IMR-90 (cell line): ENCODE measurements at regions of chr9 and their contacts with region 1.

Region 1: DNA sequence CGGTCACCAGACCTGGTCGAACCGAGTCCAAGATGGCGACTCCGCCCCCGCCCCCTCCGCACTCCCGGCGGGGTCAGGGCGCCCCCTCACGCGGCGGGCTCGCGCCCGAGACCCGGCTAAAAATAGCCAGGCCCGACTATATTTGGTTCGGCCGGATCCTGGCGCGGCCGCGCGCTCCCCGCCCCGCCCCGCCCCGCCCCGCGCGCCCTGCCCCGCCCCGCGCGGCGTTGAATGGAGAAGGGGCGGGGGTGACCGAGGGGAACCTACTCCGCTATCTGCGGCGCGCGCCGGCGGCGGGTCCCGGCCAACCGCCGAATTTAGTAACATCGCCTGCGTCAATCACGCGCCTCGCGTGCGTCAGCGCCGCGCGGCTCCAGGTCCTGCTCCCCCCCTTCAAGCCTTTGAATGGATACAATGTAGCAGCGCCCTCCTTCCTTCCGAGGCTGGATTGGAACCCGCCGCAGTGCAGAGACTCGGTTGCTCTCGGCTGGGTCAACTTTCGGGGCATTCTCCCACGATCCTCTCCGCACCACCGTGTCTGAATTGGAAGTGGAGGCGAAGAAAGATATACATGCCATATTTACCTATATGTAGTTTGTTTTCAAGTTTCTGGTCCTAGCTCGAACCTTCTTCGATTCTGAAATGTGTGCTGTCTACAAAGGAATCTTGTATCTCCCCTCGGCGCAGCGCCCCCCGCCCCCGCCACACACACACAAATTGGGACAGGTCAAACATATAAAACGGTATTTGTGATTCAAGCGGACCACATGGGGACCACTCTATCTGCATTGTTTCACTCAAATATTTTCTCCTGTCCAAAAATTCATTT is 1.6 kb upstream of the NR4A3 start:
- DNase-seq: peak; percentile 96
- ATAC-seq: peak; percentile 73
- H3K4me3 ChIP-seq: peak overlapping the region; percentile 78
- H3K27ac ChIP-seq: peak overlapping the region; percentile 91
- H3K4me1 ChIP-seq: peaks cover 6% of the 10 kb centered on the region
- H3K27me3 ChIP-seq: no peaks in the 10 kb centered on the region
- CTCF ChIP-seq: peak; percentile 24; the same call in 1 of the 2 replicates
- POLR2A ChIP-seq: peak; percentile 82; the same call in 1 of the 2 replicates
- RAD21 ChIP-seq: peak; percentile 29; the same call in 1 of the 2 replicates

Region 2: GRCh38 chr9:99184475-99185347 is 635.4 kb before region 1 on chr9:
- CTCF ChIA-PET with region 1: no interaction called
- POLR2A ChIA-PET with region 1: no interaction called
- dilution Hi-C with region 1: no loop called
- in situ Hi-C with region 1: no loop called
- intact Hi-C with region 1: loop called (anchors 1 kb)
- DNase-seq: peak; percentile 93
- ATAC-seq: peak; percentile 94
- H3K4me3 ChIP-seq: no peak overlapping the region
- H3K27ac ChIP-seq: no peak overlapping the region
- H3K4me1 ChIP-seq: peaks cover 5% of the 10 kb centered on the region
- H3K27me3 ChIP-seq: peaks cover 6% of the 10 kb centered on the region
- CTCF ChIP-seq: peak; percentile 92
- POLR2A ChIP-seq: no peak
- RAD21 ChIP-seq: peak; percentile 91

Region 3: GRCh38 chr9:99299211-99300102 is 520.6 kb before region 1 on chr9:
- CTCF ChIA-PET with region 1: no interaction called
- POLR2A ChIA-PET with region 1: no interaction called
- dilution Hi-C with region 1: no loop called
- in situ Hi-C with region 1: no loop called
- intact Hi-C with region 1: loop called (anchors 2 kb)
- DNase-seq: peak; percentile 83
- ATAC-seq: peak; percentile 92
- H3K4me3 ChIP-seq: no peak overlapping the region
- H3K27ac ChIP-seq: no peak overlapping the region
- H3K4me1 ChIP-seq: peaks cover 4% of the 10 kb centered on the region
- H3K27me3 ChIP-seq: no peaks in the 10 kb centered on the region; the same call in none of the 2 replicates
- CTCF ChIP-seq: peak; percentile 41
- POLR2A ChIP-seq: no peak
- RAD21 ChIP-seq: peak; percentile 45

Region 4: DNA sequence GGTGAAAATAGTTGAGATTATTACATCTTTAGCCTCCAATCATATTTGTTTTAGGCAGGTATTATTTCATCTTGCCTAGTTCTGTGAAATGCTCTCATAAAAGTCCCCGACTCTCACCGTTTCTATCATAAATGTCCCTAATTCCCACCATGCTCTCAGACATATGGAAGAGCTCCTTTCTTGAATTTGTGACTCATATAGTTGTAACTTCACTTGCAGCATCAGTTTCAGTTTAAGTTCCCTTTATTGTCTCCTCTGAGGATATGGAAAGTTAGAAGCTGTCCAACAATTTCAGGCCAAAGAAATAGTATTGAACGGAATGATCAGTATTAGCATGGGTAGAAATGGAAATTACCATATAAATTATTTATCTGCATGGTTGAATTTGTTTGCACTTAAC is 185.9 kb before region 1 on chr9:
- CTCF ChIA-PET with region 1: no interaction called
- POLR2A ChIA-PET with region 1: no interaction called
- dilution Hi-C with region 1: no loop called
- in situ Hi-C with region 1: no loop called
- intact Hi-C with region 1: no loop called
- DNase-seq: no peak
- ATAC-seq: no peak
- H3K4me3 ChIP-seq: no peak overlapping the region
- H3K27ac ChIP-seq: no peak overlapping the region
- H3K4me1 ChIP-seq: no peaks in the 10 kb centered on the region
- H3K27me3 ChIP-seq: peaks cover 2% of the 10 kb centered on the region; the same call in 1 of the 2 replicates
- CTCF ChIP-seq: no peak
- POLR2A ChIP-seq: no peak
- RAD21 ChIP-seq: no peak

Region 5: DNA sequence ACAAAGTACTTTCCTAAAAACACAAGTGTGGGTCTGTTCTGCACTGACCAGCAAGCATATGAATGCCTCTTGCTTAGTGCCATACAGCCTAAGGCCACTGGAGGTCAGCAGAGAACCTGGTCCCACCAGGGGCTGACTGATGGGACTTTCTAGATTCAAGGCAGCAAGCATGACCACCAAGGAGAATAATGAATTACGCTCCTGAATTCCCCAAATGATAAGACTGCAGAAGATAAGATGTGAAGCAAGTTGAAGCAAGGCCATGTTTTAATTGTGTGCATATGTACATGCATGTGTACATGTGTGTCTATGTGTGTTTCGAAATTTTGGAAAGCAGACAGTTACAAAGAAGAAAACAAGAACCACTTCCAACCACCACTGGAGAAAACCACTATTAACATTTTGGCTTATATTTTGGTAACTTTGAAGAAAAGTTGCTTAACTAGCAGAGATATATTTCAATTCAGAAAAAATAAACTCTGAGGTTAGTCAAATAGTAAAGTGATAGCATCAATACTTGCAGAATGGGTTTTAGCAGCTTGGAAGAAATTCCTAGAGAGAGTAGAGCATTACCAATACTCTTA is 208.2 kb after region 1 on chr9:
- CTCF ChIA-PET with region 1: no interaction called
- POLR2A ChIA-PET with region 1: no interaction called
- dilution Hi-C with region 1: no loop called
- in situ Hi-C with region 1: no loop called
- intact Hi-C with region 1: loop called (anchors 5 kb)
- DNase-seq: peak; percentile 76
- ATAC-seq: peak; percentile 99
- H3K4me3 ChIP-seq: no peak overlapping the region
- H3K27ac ChIP-seq: no peak overlapping the region
- H3K4me1 ChIP-seq: no peaks in the 10 kb centered on the region
- H3K27me3 ChIP-seq: no peaks in the 10 kb centered on the region
- CTCF ChIP-seq: peak; percentile 85
- POLR2A ChIP-seq: no peak
- RAD21 ChIP-seq: peak; percentile 92

Region 6: DNA sequence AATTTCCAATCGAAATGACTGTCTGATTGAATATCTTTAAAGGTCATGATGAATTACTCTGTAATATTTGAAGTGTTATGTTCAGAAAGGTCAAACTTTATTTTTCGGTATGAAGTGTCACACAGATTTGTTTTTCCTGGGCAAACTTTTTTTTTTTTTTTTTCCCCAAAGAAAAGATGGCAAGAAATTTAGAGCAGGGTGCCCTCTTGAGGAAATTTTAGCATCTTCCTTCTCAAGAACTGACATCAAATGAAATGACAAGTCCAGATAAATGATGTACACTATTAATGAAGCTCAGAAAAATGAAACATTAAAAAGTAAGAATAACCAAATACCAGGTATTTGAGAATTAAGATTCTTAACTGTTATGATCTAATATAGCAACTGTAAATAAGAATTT is 402.6 kb after region 1 on chr9:
- CTCF ChIA-PET with region 1: no interaction called
- POLR2A ChIA-PET with region 1: no interaction called
- dilution Hi-C with region 1: no loop called
- in situ Hi-C with region 1: loop called (anchors 25 kb)
- intact Hi-C with region 1: loop called (anchors 5 kb)
- DNase-seq: peak; percentile 53
- ATAC-seq: 0 out of 2 replicates have a peak, but pooled peaks have one; percentile 27
- H3K4me3 ChIP-seq: no peak overlapping the region
- H3K27ac ChIP-seq: no peak overlapping the region
- H3K4me1 ChIP-seq: peaks cover 2% of the 10 kb centered on the region
- H3K27me3 ChIP-seq: no peaks in the 10 kb centered on the region
- CTCF ChIP-seq: peak; percentile 61
- POLR2A ChIP-seq: no peak
- RAD21 ChIP-seq: peak; percentile 64